Activated T-helper 1 cell treated with anti-CD3 and anti-CD28 coated beads, Interleukin-12 subunit alpha, Interleukin-12 subunit beta, Interleukin-2, Interleukin-4 antibody, amounts not matched to agents 30 ng/mL and 10 ng/mL and 1 ng/mL, durations not matched to agents 14 hours and 24 hours and 36 hours (primary cell): ENCODE measurements at regions of chr13 and their contacts with region 1.

Region 1: DNA sequence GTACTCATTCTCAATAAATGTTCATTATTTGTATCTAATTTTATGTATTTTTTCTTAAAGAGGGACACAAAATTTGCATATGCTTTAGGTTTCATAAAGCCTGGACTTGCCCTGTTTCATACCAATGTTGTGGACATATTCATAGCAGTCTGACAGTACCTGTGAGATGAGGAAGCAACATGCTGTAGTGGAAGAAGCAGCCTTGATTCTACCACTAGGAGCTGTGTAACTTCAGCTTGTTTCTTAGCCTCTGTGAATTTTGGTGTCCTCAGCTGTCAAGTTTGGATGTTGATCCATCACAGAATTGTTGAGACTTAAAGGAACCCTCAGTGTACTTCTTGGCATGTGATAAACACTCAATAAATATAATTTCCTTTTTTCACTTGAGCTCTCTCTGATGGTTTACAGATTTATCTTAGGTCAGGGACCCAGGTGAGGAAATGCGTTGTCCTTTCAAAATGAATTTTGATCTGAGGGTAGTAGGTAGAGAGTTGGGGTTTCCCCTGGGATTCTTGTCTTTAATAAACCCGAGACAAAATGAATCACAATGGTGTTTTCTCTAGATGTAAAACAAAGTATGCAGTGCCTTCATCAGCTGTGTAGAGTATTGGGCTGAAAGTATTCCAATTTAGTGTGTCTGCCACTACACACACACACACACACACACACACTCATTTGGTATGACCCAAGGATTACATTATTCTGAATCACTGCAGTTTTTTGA is 152.1 kb downstream of the KCNRG start:
- DNase-seq: no peak
- H3K4me3 Mint-ChIP-seq: no peak overlapping the region
- H3K27ac Mint-ChIP-seq: no peak overlapping the region
- H3K4me1 Mint-ChIP-seq: peaks cover 10% of the 10 kb centered on the region
- H3K27me3 Mint-ChIP-seq: peaks cover 20% of the 10 kb centered on the region

Region 2: DNA sequence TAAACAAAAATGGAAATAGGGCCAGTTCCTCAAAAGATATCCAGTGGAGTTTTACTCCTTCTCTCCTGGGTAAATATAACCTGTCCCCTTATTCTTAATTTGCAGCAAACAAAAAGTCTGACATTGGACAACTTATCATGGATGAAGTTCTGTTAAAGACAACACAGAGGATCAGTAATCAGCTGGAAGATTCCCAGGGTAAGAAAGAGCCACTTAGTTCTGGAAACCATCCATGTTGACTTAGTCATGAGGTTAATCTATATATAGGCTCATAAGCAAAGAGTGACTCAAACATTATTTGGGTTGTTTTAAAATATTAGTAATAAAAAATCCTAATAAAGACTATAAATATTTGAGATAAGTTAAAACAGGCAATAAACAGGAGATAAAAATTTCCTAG is 435.6 kb before region 1 on chr13:
- intact Hi-C with region 1: no loop called
- DNase-seq: no peak
- H3K4me3 Mint-ChIP-seq: no peak overlapping the region
- H3K27ac Mint-ChIP-seq: no peak overlapping the region
- H3K4me1 Mint-ChIP-seq: no peaks in the 10 kb centered on the region
- H3K27me3 Mint-ChIP-seq: no peaks in the 10 kb centered on the region

Region 3: GRCh38 chr13:50140581-50141374 is 26.6 kb before region 1 on chr13:
- intact Hi-C with region 1: loop called (anchors 2 kb)
- DNase-seq: no peak
- H3K4me3 Mint-ChIP-seq: no peak overlapping the region
- H3K27ac Mint-ChIP-seq: no peak overlapping the region
- H3K4me1 Mint-ChIP-seq: peaks cover 8% of the 10 kb centered on the region
- H3K27me3 Mint-ChIP-seq: peaks cover 58% of the 10 kb centered on the region

Region 4: GRCh38 chr13:50244713-50245574 is 77.6 kb after region 1 on chr13:
- intact Hi-C with region 1: loop called (anchors 2 kb)
- DNase-seq: peak; percentile 53
- H3K4me3 Mint-ChIP-seq: peak overlapping the region; percentile 20
- H3K27ac Mint-ChIP-seq: peak overlapping the region; percentile 73
- H3K4me1 Mint-ChIP-seq: peaks cover 56% of the 10 kb centered on the region
- H3K27me3 Mint-ChIP-seq: peaks cover 21% of the 10 kb centered on the region

Region 5: GRCh38 chr13:50543782-50544181 is 376.4 kb after region 1 on chr13:
- intact Hi-C with region 1: no loop called
- DNase-seq: no peak
- H3K4me3 Mint-ChIP-seq: no peak overlapping the region
- H3K27ac Mint-ChIP-seq: no peak overlapping the region
- H3K4me1 Mint-ChIP-seq: no peaks in the 10 kb centered on the region
- H3K27me3 Mint-ChIP-seq: peaks cover 9% of the 10 kb centered on the region